PC-3 (cell line): ENCODE measurements at regions of chr19 and their contacts with region 1.

Region 1: DNA sequence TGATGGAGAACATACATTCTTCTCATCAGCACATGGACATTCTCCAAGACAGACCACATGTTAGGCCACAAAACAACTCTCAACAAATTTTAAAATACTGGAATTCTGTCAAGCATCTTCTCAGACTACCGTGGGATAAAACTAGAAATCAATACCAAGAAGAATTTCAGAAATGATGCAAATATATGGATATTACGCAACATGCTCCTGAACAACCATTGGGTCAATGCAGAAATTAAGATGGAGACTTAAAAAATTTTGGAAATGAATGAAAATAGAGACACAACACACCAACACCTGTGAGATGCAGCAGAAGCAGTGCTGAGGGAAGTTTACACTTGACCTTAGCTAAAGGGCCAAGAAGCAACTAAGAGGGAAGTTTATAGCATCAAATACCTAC is 162.8 kb downstream of the CACNA1A start:
- DNase-seq: no peak
- ATAC-seq: no peak
- H3K4me3 ChIP-seq: no peak overlapping the region
- H3K27ac ChIP-seq: no peak overlapping the region
- H3K4me1 ChIP-seq: no peaks in the 10 kb centered on the region
- H3K27me3 ChIP-seq: peaks cover 65% of the 10 kb centered on the region
- CTCF ChIP-seq: no peak

Region 2: DNA sequence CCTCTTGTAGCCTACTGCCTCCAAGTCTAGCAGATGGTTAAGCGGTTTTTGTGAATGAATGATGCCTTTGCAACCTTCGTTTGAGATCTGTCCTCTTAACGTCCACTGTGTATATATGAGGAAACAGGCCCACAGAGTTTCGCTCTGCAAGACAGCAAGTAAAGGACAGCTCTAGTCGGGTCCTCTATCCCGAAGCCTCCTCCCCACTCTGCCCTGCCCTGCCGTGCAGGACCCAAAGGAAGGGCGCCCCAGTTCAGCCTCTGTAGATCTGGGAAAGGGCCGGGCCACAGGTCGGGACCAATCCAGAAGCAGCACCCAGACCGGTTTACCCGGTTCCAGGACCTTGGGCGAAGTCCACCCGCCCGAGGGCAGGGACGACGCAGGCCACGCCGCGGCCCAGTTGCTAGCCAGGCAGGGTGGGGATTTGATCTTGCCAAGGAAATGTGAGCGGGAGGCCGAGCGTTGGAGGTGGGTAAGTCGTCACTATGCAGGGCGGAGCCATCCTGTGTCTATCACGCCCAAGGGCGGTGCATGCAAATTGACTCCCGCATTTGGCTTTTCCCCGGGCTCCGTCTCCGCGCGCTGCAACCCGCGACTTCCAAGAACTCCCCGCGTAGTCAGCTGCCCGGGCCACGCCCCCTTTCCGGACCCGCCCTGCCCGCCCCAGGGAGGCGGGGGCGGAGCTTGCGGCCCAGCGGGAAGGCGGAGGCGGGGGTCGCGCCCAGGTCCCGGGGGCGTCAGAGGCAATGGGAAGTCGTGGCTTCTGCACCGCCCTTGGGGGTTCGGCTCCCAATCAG is 180.8 kb before region 1 on chr19:
- CTCF ChIA-PET with region 1: no interaction called
- POLR2A ChIA-PET with region 1: no interaction called
- intact Hi-C with region 1: no loop called
- DNase-seq: peak; percentile 100
- ATAC-seq: peak; percentile 50
- H3K4me3 ChIP-seq: peak overlapping the region; percentile 67
- H3K27ac ChIP-seq: peak overlapping the region; percentile 97
- H3K4me1 ChIP-seq: peaks cover 63% of the 10 kb centered on the region
- H3K27me3 ChIP-seq: no peaks in the 10 kb centered on the region
- CTCF ChIP-seq: no peak

Region 3: DNA sequence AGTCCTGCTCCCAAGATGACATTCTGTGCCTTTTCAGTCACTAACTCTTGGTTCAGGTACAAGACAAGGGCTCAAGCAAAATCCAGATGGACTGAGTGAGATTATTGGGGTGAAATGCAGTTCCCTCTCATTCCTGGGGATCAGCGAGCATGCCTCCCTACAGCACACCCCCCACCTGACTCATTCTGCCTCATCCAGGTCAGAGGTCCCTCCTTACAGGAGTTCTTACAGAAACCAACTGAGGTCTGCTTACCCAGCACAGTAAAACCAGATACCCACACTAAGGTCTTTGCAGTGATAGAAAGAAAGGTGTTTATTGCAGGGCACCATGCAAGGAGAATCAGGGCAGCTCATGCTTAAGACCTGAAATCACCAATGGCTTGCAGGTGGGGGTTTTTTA is 399.2 kb after region 1 on chr19:
- CTCF ChIA-PET with region 1: no interaction called
- POLR2A ChIA-PET with region 1: interaction called, 13 read pairs
- intact Hi-C with region 1: no loop called
- DNase-seq: peak; percentile 75
- ATAC-seq: peak; percentile 51
- H3K4me3 ChIP-seq: no peak overlapping the region
- H3K27ac ChIP-seq: peak overlapping the region; percentile 57
- H3K4me1 ChIP-seq: peaks cover 13% of the 10 kb centered on the region
- H3K27me3 ChIP-seq: no peaks in the 10 kb centered on the region
- CTCF ChIP-seq: no peak